ENCODE measurements at regions of chr12 and their contacts with region 1.

Region 1: GRCh38 chr12:96035278-96036236 is at the start of gene LTA4H:
- DNase-seq: peak; percentile 86 to 99 (median 97)
- ATAC-seq: peak; percentile 97
- H3K4me3 ChIP-seq: peak within 1 kb of the TSS; percentile 85
- H3K4me3 Mint-ChIP-seq: no peak within 1 kb of the TSS
- H3K27ac ChIP-seq: peak within 1 kb of the TSS; percentile 81
- H3K27ac Mint-ChIP-seq: no peak within 1 kb of the TSS
- H3K4me1 ChIP-seq: peaks cover 4 to 9% of the 10 kb centered on the region in 2 donors
- H3K4me1 Mint-ChIP-seq: peaks cover 5 to 19% (median 17%) of the 10 kb centered on the region in 7 donors
- H3K27me3 ChIP-seq: no peaks in the 10 kb centered on the region
- H3K27me3 Mint-ChIP-seq: no peaks in the 10 kb centered on the region
- total RNA-seq, gene LTA4H: 52.5 to 151 (median 63.4) TPM

Region 2: DNA sequence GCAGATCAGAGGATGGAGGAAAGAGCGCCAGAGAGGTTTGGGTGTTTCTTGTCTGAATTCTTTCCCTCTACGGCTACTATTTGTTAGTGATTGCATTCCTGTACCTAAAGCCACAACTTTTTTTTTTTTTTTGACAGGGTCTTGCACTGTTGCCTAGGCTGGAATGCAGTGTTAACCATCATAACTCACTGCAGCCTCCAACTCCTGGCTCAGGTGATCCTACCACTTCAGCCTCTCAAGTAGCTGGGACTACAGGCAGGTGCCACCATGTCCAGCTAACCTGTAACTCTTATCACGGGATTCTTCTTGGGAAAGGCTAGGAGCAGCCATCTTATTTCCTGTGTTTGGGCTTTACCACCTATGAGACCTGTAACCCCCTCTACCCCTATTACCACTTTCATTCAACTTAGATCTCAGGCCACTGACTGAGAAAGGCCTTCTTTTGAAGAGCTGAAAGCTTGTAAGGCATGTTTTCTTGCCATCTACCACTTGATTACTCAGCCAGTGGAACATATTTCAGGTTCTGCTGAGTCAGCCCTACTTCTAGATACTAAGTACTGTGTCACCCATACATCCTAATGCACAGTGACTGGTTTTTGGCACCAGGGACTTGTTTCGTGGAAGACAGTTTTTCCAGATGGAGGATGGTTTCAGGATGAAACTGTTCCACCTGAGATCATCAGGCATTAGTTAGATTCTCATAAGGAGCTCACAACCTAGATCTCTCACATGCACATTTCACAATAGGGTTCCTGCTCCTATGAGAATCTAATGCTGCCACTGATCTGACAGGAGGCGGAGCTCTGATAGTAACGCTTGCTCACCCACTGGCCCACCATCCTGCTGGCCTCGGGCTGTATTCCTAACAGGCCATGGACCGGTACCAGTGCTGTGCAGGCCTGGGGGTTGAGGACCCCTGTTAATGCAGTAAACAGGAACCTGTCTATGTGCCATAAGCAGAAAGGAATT is 811.1 kb before region 1 on chr12:
- CTCF ChIA-PET with region 1: no interaction called
- POLR2A ChIA-PET with region 1: no interaction called
- intact Hi-C with region 1: no loop called
- DNase-seq: no peak
- ATAC-seq: no peak
- H3K4me3 ChIP-seq: no peak overlapping the region
- H3K4me3 Mint-ChIP-seq: no peak overlapping the region
- H3K27ac ChIP-seq: no peak overlapping the region
- H3K27ac Mint-ChIP-seq: peak overlapping the region in 1 of 9 donors; percentile 22
- H3K4me1 ChIP-seq: no peaks in the 10 kb centered on the region
- H3K4me1 Mint-ChIP-seq: peaks cover 12 to 74% (median 56%) of the 10 kb centered on the region in 7 donors
- H3K27me3 ChIP-seq: no peaks in the 10 kb centered on the region
- H3K27me3 Mint-ChIP-seq: no peaks in the 10 kb centered on the region

Region 3: GRCh38 chr12:95548539-95549391 is 486.8 kb before region 1 on chr12:
- CTCF ChIA-PET with region 1: no interaction called
- POLR2A ChIA-PET with region 1: no interaction called
- intact Hi-C with region 1: loop called in 1 of 2 experiments (anchors 1 kb)
- DNase-seq: peak; percentile 66 to 81 (median 77)
- ATAC-seq: peak; percentile 94
- H3K4me3 ChIP-seq: peak overlapping the region; percentile 75
- H3K4me3 Mint-ChIP-seq: peak overlapping the region; percentile 89 to 96 (median 94)
- H3K27ac ChIP-seq: peak overlapping the region; percentile 96
- H3K27ac Mint-ChIP-seq: peak overlapping the region; percentile 70 to 98 (median 94)
- H3K4me1 ChIP-seq: peaks cover 6 to 23% of the 10 kb centered on the region in 2 donors
- H3K4me1 Mint-ChIP-seq: peaks cover 36 to 73% (median 61%) of the 10 kb centered on the region in 7 donors
- H3K27me3 ChIP-seq: no peaks in the 10 kb centered on the region
- H3K27me3 Mint-ChIP-seq: peaks cover 0 to 22% (median 7%) of the 10 kb centered on the region in 5 donors

Region 4: DNA sequence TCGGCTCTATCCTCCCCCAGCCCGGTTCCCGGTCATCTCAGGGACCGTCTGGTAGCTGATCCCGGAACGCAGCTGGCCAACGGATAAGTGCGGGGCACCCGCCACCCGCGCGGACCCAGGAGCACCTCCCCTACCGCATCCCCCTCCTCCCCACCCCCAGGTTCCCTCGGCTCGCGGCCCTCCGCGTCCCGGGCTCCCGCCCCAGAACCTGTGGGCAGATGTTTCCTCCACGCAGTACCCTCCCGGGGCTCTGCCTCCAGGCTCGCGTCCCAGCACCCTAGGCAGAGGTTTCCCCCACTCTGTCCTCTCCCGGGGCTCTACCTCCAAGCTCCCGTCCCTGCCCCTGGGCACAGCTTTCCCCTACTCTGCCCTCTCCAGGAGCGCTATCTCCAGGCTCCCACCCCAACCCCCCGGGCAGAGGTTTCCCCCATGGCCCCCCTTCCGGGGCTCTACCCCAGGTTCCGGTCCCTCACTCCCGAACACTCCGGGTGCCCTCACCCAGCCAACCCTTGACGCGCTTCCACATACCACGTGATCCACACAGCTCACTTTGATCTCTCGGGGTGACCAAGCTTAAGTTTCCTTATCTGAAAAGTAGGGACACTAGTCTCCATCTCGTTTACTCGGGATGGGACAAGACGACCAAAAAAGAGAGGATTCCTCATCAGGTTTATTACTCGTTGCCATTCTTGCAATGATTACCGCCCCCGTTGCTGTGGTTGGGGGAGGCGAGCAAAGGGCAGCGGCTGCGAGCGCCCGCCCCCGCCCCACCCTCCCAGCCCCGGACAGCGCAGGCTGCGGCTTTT is 92.8 kb before region 1 on chr12 and contains the start of gene CCDC38:
- CTCF ChIA-PET with region 1: no interaction called
- POLR2A ChIA-PET with region 1: interaction called, 8 read pairs
- intact Hi-C with region 1: loop called (anchors 1 to 2 kb)
- DNase-seq: peak; percentile 56 to 86 (median 82)
- ATAC-seq: peak; percentile 97
- H3K4me3 ChIP-seq: peak within 1 kb of the TSS; percentile 93
- H3K4me3 Mint-ChIP-seq: peak within 1 kb of the TSS; percentile 88 to 99 (median 96)
- H3K27ac ChIP-seq: peak within 1 kb of the TSS; percentile 86
- H3K27ac Mint-ChIP-seq: peak within 1 kb of the TSS; percentile 85 to 97 (median 89)
- H3K4me1 ChIP-seq: peaks cover 6% of the 10 kb centered on the region in 2 donors
- H3K4me1 Mint-ChIP-seq: peaks cover 4 to 12% (median 10%) of the 10 kb centered on the region in 7 donors
- H3K27me3 ChIP-seq: no peaks in the 10 kb centered on the region
- H3K27me3 Mint-ChIP-seq: peaks cover 0 to 26% (median 0%) of the 10 kb centered on the region in 5 donors
- total RNA-seq, gene CCDC38: 0.07 to 0.27 TPM in 2 of 5 experiments, not detected in the others

Region 5: GRCh38 chr12:96070670-96071279 is 35.2 kb after region 1 on chr12:
- CTCF ChIA-PET with region 1: no interaction called
- POLR2A ChIA-PET with region 1: interaction called, 3 read pairs
- intact Hi-C with region 1: loop called in 1 of 2 experiments (anchors 1 kb)
- DNase-seq: peak in 1 of 9 donors; percentile 20
- ATAC-seq: peak; percentile 52
- H3K4me3 ChIP-seq: no peak overlapping the region
- H3K4me3 Mint-ChIP-seq: no peak overlapping the region
- H3K27ac ChIP-seq: no peak overlapping the region
- H3K27ac Mint-ChIP-seq: peak overlapping the region in 2 of 9 donors; percentile 42 to 63
- H3K4me1 ChIP-seq: peaks cover 0 to 8% of the 10 kb centered on the region in 2 donors
- H3K4me1 Mint-ChIP-seq: peaks cover 4 to 26% (median 24%) of the 10 kb centered on the region in 7 donors
- H3K27me3 ChIP-seq: no peaks in the 10 kb centered on the region
- H3K27me3 Mint-ChIP-seq: peaks cover 0 to 11% (median 0%) of the 10 kb centered on the region in 5 donors

Region 6: GRCh38 chr12:96108321-96108720 is 72.8 kb after region 1 on chr12:
- CTCF ChIA-PET with region 1: no interaction called
- POLR2A ChIA-PET with region 1: no interaction called
- intact Hi-C with region 1: no loop called
- DNase-seq: peak in 8 of 9 donors; percentile 11 to 52 (median 42)
- ATAC-seq: peak; percentile 74
- H3K4me3 ChIP-seq: no peak overlapping the region
- H3K4me3 Mint-ChIP-seq: peak overlapping the region; percentile 60 to 88 (median 78)
- H3K27ac ChIP-seq: peak overlapping the region; percentile 58
- H3K27ac Mint-ChIP-seq: peak overlapping the region; percentile 84 to 98 (median 91)
- H3K4me1 ChIP-seq: peaks cover 0 to 10% of the 10 kb centered on the region in 2 donors
- H3K4me1 Mint-ChIP-seq: peaks cover 13 to 43% (median 31%) of the 10 kb centered on the region in 7 donors
- H3K27me3 ChIP-seq: no peaks in the 10 kb centered on the region
- H3K27me3 Mint-ChIP-seq: peaks cover 0 to 8% (median 0%) of the 10 kb centered on the region in 5 donors

Region 7: GRCh38 chr12:96445691-96446583 is 410.4 kb after region 1 on chr12:
- CTCF ChIA-PET with region 1: no interaction called
- POLR2A ChIA-PET with region 1: no interaction called
- intact Hi-C with region 1: loop called in 1 of 2 experiments (anchors 1 kb)
- DNase-seq: peak in 8 of 9 donors; percentile 50 to 83 (median 78)
- ATAC-seq: peak; percentile 97
- H3K4me3 ChIP-seq: peak overlapping the region; percentile 10
- H3K4me3 Mint-ChIP-seq: peak overlapping the region; percentile 6 to 76 (median 63)
- H3K27ac ChIP-seq: peak overlapping the region; percentile 80
- H3K27ac Mint-ChIP-seq: peak overlapping the region; percentile 83 to 97 (median 92)
- H3K4me1 ChIP-seq: peaks cover 23 to 26% of the 10 kb centered on the region in 2 donors
- H3K4me1 Mint-ChIP-seq: peaks cover 17 to 55% (median 46%) of the 10 kb centered on the region in 7 donors
- H3K27me3 ChIP-seq: no peaks in the 10 kb centered on the region
- H3K27me3 Mint-ChIP-seq: no peaks in the 10 kb centered on the region

Measured in naive thymus-derived CD4-positive, alpha-beta T cell (primary cell).